ENCODE measurements at regions of chr4 and their contacts with region 1.

Region 1: DNA sequence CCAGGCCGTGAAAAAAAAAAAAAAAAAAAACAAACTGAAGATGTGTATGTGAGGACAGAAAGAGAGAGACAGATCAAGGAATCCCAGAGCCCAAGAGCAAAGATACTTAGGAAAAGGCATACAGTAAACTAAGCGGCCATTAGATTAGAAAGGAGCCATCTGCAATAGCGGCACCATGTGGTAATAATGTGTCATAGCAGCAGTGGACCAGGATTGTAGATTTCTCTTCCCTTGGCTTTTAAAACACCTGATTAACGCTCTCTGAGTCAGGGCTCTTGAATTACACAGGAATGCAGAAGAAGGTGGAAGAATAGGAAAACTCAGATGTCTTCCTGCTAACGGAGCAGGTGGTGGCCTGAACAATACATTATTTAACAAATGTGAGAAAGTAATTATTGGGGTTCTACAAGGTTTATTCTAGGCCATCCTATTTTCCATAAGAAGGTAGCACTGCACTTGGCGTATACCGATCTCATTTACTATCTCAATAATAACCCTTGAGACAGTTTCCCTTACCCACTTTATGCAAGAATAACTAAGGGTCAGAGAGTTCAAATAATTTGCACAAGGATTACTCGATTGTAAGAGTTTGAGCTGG is 182.7 kb downstream of the KCNIP4 start:
- DNase-seq: peak in 1 of 6 donors; percentile 45
- ATAC-seq: peak; percentile 64 to 93 (median 86)
- H3K4me3 ChIP-seq: no peak overlapping the region
- H3K27ac ChIP-seq: no peak overlapping the region
- H3K4me1 ChIP-seq: no peaks in the 10 kb centered on the region
- H3K27me3 ChIP-seq: peaks cover 0 to 9% (median 0%) of the 10 kb centered on the region in 4 donors
- CTCF ChIP-seq: peak; percentile 72 to 84 (median 74)

Region 2: DNA sequence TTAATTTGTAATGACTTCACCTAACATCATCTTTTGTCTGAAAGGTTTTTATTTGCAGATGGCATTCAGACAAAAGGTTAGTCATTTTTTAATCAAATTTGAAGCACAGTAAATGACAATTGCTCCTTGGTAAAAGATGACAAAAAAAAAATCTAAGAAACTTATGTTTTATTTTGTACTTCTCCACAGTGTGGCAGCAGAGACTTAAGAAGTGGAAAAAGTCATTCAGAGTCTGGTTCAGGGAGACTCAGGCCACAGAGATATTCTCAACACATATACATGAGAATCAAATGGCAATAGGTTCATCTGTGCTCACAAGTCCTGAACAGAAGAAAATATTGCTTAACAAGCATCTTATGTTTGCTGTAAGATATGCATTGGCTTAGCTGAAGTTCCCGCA is 253.6 kb before region 1 on chr4:
- intact Hi-C with region 1: loop called in 2 of 3 experiments (anchors 5 to 10 kb)
- DNase-seq: no peak
- ATAC-seq: peak in 3 of 4 donors; percentile 66 to 71 (median 68)
- H3K4me3 ChIP-seq: no peak overlapping the region
- H3K27ac ChIP-seq: no peak overlapping the region
- H3K4me1 ChIP-seq: no peaks in the 10 kb centered on the region
- H3K27me3 ChIP-seq: no peaks in the 10 kb centered on the region
- CTCF ChIP-seq: no peak

Measured in pancreas (tissue), 10 donors.